ENCODE measurements at regions of chr2 and their contacts with region 1.

Region 1: DNA sequence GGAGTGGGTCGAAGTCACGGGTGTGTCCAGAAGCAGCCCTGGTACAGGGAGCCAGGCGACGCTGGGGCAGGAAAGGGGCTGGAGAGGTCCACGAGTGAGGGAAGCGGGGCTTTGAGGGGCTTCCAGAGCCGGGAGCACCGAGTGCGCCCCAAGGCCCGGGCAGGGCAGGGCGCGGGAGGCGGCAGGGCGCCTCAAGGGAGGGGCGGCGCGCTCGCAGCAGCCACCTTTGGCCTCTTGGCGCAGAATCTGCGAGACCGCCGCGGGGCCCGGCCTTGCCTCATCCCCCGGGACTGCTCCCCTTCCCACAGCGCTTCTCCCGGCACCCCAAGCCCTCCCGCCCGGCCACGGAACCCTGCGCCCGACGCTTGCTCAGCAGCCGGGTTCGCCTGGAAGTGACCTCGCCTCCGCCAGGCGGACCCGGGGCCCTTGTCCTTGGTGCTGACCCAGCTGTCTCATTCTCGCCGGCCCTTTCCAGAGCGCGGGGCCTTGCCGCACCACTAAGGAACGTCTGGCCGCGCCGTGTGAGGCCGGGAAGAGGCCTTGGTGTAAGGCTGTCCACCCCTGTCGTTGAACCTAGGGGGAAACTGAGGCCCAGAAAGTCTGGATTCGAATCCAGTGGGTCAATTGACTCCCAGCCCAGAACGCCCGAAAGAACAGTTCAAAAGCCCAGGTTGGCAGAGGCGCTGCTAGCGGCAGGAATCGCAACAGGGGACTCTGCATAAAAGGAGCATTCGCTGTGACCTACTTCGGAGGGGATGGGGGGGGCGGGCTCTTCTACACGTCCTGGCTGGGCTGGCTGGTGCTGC is 584 bp upstream of the DNER start:
- DNase-seq: peak; percentile 55
- H3K4me3 ChIP-seq: peak overlapping the region; percentile 56
- H3K27ac ChIP-seq: no peak overlapping the region
- H3K4me1 ChIP-seq: peaks cover 8% of the 10 kb centered on the region
- H3K27me3 ChIP-seq: peaks cover 20% of the 10 kb centered on the region
- CTCF ChIP-seq: no peak

Region 2: DNA sequence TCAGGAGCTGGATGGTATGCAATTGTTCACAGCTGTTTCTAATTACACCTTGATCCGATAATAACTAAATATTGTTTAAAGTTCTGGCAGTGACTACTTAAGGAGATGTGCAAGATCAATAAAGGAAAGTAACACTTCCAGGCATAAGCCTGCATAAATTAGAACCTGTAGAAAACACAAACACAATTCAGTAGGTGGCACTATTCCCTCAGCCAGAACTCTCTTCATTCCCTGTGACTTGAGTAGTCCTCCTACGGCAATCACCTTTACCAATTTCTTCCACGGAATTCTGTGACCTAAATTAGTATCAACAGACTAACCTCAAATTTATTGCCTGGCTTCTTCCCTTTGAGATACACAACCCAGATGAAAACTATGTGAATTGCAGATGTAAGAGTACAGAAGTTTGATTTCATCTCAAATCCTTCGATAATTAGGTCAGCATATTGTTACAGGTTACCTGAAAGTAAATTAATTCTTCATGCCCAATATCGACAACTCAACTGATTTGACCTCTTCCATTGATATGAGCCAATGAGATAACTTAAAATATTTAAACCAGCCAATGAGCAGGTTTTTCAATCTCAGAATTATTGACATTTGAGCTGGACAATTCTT is 581.7 kb before region 1 on chr2:
- CTCF ChIA-PET with region 1: no interaction called
- POLR2A ChIA-PET with region 1: no interaction called
- intact Hi-C with region 1: loop called (anchors 10 kb)
- DNase-seq: peak; percentile 57
- H3K4me3 ChIP-seq: no peak overlapping the region
- H3K27ac ChIP-seq: no peak overlapping the region
- H3K4me1 ChIP-seq: no peaks in the 10 kb centered on the region
- H3K27me3 ChIP-seq: no peaks in the 10 kb centered on the region
- CTCF ChIP-seq: peak; percentile 64

Region 3: DNA sequence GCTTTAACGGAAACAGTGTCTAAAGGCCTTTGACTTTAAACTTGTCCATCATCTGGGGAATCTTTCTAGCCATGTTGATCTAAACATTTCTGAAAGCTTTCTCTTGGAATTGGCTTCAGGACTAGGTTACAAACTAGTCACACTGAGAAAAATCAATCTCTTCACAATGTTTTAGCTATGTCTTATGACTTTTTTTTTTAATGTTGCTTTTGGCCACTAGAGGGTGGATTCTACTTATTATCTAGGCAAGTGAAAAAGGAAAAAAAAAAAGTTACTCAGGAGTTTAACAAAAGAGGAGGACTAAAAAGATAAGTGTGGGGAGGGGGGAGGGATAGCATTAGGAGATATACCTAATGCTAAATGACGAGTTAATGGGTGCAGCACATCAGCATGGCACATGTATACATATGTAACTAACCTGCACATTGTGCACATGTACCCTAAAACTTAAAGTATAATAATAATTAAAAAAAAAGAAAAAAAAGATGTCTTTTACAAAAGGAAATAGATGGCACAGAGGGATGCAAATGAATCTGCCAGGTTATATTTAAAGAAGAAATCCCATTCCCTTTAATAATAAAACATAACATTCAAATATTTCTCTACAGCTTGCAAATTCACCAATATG is 283.5 kb before region 1 on chr2:
- CTCF ChIA-PET with region 1: interaction called, 3 read pairs
- POLR2A ChIA-PET with region 1: no interaction called
- intact Hi-C with region 1: loop called (anchors 5 kb)
- DNase-seq: peak; percentile 69
- H3K4me3 ChIP-seq: no peak overlapping the region
- H3K27ac ChIP-seq: no peak overlapping the region
- H3K4me1 ChIP-seq: no peaks in the 10 kb centered on the region
- H3K27me3 ChIP-seq: no peaks in the 10 kb centered on the region
- CTCF ChIP-seq: peak; percentile 64

Region 4: DNA sequence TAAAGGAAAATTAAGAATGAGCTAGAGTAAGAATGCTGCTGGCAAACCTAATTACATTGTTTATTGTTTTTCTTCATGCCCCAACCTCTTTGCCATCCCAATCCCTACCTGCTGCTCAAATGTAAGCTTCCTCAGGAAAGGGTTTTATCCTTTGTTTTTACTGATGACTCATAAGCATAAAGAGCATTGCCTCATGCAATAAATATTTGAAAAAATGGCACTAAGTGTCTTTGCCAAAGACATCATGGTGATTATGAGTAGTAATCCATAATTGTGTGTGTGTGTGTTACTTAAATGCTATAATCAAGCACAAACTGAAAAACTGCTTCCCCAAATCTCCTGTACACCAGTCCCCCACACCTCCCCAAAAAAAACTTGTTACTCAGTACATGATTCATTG is 54.0 kb before region 1 on chr2:
- CTCF ChIA-PET with region 1: no interaction called
- POLR2A ChIA-PET with region 1: no interaction called
- intact Hi-C with region 1: no loop called
- DNase-seq: peak; percentile 13
- H3K4me3 ChIP-seq: no peak overlapping the region
- H3K27ac ChIP-seq: no peak overlapping the region
- H3K4me1 ChIP-seq: no peaks in the 10 kb centered on the region
- H3K27me3 ChIP-seq: no peaks in the 10 kb centered on the region
- CTCF ChIP-seq: no peak

Region 5: GRCh38 chr2:230326453-230327417 is 611.8 kb after region 1 on chr2 and contains the start of gene SP140L:
- CTCF ChIA-PET with region 1: no interaction called
- POLR2A ChIA-PET with region 1: no interaction called
- intact Hi-C with region 1: no loop called
- DNase-seq: no peak
- H3K4me3 ChIP-seq: no peak within 1 kb of the TSS
- H3K27ac ChIP-seq: no peak within 1 kb of the TSS
- H3K4me1 ChIP-seq: no peaks in the 10 kb centered on the region
- H3K27me3 ChIP-seq: no peaks in the 10 kb centered on the region
- CTCF ChIP-seq: no peak
- total RNA-seq, gene SP140L: 0.37 and 0.61 TPM in 2 replicates

Measured in A673 (cell line).